IMR-90 (cell line): ENCODE measurements at regions of chr2 and their contacts with region 1.

Region 1: GRCh38 chr2:199488772-199489400 is 31.1 kb upstream of the SATB2 start:
- DNase-seq: peak; percentile 59
- ATAC-seq: peak; percentile 86
- H3K4me3 ChIP-seq: no peak overlapping the region
- H3K27ac ChIP-seq: no peak overlapping the region
- H3K4me1 ChIP-seq: no peaks in the 10 kb centered on the region
- H3K27me3 ChIP-seq: no peaks in the 10 kb centered on the region
- CTCF ChIP-seq: peak; percentile 81
- POLR2A ChIP-seq: no peak
- RAD21 ChIP-seq: peak; percentile 76

Region 2: GRCh38 chr2:198309673-198310280 is 1179.1 kb before region 1 on chr2:
- CTCF ChIA-PET with region 1: interaction called, 30 read pairs
- POLR2A ChIA-PET with region 1: no interaction called
- dilution Hi-C with region 1: no loop called
- in situ Hi-C with region 1: loop called (anchors 10 kb)
- intact Hi-C with region 1: loop called (anchors 1 kb)
- DNase-seq: peak; percentile 38
- ATAC-seq: peak; percentile 56
- H3K4me3 ChIP-seq: no peak overlapping the region
- H3K27ac ChIP-seq: no peak overlapping the region
- H3K4me1 ChIP-seq: no peaks in the 10 kb centered on the region
- H3K27me3 ChIP-seq: no peaks in the 10 kb centered on the region; the same call in 1 of the 2 replicates
- CTCF ChIP-seq: peak; percentile 81
- POLR2A ChIP-seq: no peak
- RAD21 ChIP-seq: peak; percentile 54

Region 3: DNA sequence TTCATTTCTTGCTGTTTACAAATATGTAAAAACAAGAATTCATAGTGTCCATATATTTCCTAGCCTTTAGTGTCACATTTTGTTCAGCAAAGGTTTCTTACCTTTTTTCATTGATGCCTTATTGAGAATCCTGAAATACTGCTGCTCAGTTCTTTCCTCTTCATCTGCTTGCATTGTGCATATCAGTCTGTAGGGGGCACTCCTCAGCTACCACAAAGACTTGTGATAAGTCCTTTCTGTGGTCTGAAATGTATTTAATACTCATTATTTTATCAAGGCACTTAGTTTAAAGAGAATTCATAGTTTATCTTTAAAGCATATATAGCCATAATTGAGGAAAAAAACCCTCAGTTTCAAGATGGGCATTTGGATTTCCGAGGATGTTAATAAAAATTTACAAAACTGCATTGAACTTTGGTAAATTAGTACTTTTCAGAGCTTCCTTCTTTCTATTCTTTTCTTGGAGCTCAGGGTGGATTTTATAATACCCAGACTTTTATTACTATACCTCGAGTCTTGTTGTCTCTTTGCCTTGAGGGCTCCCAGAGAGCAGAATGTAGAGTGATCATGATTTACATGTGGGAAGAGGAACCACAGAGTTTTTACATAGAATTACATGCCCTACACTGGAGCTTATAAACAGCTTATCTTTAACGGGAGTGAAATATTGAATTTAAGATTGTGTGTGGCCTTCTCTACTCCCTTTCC is 1114.4 kb before region 1 on chr2:
- CTCF ChIA-PET with region 1: interaction called, 12 read pairs
- POLR2A ChIA-PET with region 1: no interaction called
- dilution Hi-C with region 1: no loop called
- in situ Hi-C with region 1: loop called (anchors 25 kb)
- intact Hi-C with region 1: loop called (anchors 1 kb)
- DNase-seq: peak; percentile 70
- ATAC-seq: peak; percentile 79
- H3K4me3 ChIP-seq: no peak overlapping the region
- H3K27ac ChIP-seq: no peak overlapping the region
- H3K4me1 ChIP-seq: no peaks in the 10 kb centered on the region
- H3K27me3 ChIP-seq: no peaks in the 10 kb centered on the region
- CTCF ChIP-seq: peak; percentile 74
- POLR2A ChIP-seq: no peak
- RAD21 ChIP-seq: peak; percentile 75

Region 4: GRCh38 chr2:198657512-198658121 is 831.3 kb before region 1 on chr2:
- CTCF ChIA-PET with region 1: interaction called, 4 read pairs
- POLR2A ChIA-PET with region 1: no interaction called
- dilution Hi-C with region 1: no loop called
- in situ Hi-C with region 1: loop called (anchors 25 kb)
- intact Hi-C with region 1: loop called (anchors 1 kb)
- DNase-seq: peak; percentile 29
- ATAC-seq: no peak
- H3K4me3 ChIP-seq: no peak overlapping the region
- H3K27ac ChIP-seq: no peak overlapping the region
- H3K4me1 ChIP-seq: no peaks in the 10 kb centered on the region
- H3K27me3 ChIP-seq: no peaks in the 10 kb centered on the region
- CTCF ChIP-seq: peak; percentile 47
- POLR2A ChIP-seq: no peak
- RAD21 ChIP-seq: peak; percentile 27; the same call in 1 of the 2 replicates

Region 5: GRCh38 chr2:199378948-199379650 is 109.8 kb before region 1 on chr2:
- CTCF ChIA-PET with region 1: no interaction called
- POLR2A ChIA-PET with region 1: no interaction called
- dilution Hi-C with region 1: no loop called
- in situ Hi-C with region 1: no loop called
- intact Hi-C with region 1: no loop called
- DNase-seq: peak; percentile 75
- ATAC-seq: peak; percentile 85
- H3K4me3 ChIP-seq: no peak overlapping the region
- H3K27ac ChIP-seq: no peak overlapping the region
- H3K4me1 ChIP-seq: no peaks in the 10 kb centered on the region
- H3K27me3 ChIP-seq: no peaks in the 10 kb centered on the region
- CTCF ChIP-seq: no peak
- POLR2A ChIP-seq: no peak
- RAD21 ChIP-seq: no peak

Region 6: GRCh38 chr2:199409759-199410529 is 78.9 kb before region 1 on chr2:
- CTCF ChIA-PET with region 1: no interaction called
- POLR2A ChIA-PET with region 1: no interaction called
- dilution Hi-C with region 1: no loop called
- in situ Hi-C with region 1: no loop called
- intact Hi-C with region 1: no loop called
- DNase-seq: peak; percentile 36
- ATAC-seq: peak; percentile 59
- H3K4me3 ChIP-seq: no peak overlapping the region
- H3K27ac ChIP-seq: no peak overlapping the region
- H3K4me1 ChIP-seq: peaks cover 6% of the 10 kb centered on the region
- H3K27me3 ChIP-seq: no peaks in the 10 kb centered on the region
- CTCF ChIP-seq: no peak
- POLR2A ChIP-seq: no peak
- RAD21 ChIP-seq: no peak

Region 7: DNA sequence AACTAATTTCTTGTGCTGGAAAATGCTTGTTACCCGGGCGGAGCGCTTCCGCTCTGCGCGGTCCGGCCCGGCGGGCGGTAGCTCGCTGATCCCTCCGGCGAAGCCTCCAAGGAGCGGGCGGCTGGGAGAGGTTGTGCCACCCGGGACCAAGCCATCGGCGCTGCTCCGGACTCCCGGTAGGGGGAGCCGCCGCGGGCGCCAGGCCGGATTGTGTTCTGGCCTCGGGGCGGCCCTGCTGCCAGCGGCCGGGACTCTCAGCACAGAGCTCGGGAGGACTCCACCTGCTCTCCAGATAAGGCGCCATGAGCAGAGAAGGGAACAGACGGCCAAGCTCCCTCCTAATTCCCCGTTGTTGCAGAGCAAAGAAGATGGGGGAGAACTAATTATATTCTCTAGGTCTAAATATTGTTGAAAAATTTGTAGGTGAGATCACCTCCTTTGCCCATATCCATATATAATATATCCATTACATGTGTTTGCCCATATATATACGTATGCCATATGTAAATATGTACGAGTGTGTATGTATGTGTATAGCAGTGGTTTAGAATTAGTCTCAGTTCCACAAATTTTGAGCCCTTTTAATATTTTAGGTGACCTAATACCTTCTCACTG is 17.3 kb before region 1 on chr2:
- CTCF ChIA-PET with region 1: interaction called, 12 read pairs
- POLR2A ChIA-PET with region 1: no interaction called
- dilution Hi-C with region 1: no loop called
- in situ Hi-C with region 1: no loop called
- intact Hi-C with region 1: no loop called
- DNase-seq: peak; percentile 45
- ATAC-seq: peak; percentile 98
- H3K4me3 ChIP-seq: peak overlapping the region; percentile 28; the same call in 1 of the 2 replicates
- H3K27ac ChIP-seq: no peak overlapping the region
- H3K4me1 ChIP-seq: no peaks in the 10 kb centered on the region
- H3K27me3 ChIP-seq: peaks cover 65% of the 10 kb centered on the region
- CTCF ChIP-seq: peak; percentile 75
- POLR2A ChIP-seq: no peak
- RAD21 ChIP-seq: peak; percentile 45

Region 8: DNA sequence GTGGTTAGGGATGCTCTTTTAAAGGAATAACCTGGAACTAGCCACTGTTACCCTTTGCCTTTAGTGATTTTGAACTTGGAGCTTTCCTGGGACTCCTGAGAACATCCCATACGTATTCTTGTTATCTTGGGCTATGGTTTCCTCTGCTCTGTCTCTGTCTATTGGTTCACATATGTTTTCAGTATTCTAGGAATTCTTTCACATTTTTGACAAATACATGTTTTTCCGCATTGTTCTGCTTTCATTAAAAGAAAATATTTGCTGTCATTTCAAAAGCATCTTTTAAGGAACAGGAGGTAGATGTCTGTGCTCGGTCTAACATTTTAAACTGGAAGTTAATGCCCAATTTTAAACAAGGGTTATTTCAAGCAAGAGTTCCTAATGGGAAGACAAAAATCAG is 147.1 kb after region 1 on chr2:
- CTCF ChIA-PET with region 1: no interaction called
- POLR2A ChIA-PET with region 1: no interaction called
- dilution Hi-C with region 1: no loop called
- in situ Hi-C with region 1: no loop called
- intact Hi-C with region 1: no loop called
- DNase-seq: no peak
- ATAC-seq: no peak
- H3K4me3 ChIP-seq: no peak overlapping the region
- H3K27ac ChIP-seq: no peak overlapping the region
- H3K4me1 ChIP-seq: no peaks in the 10 kb centered on the region
- H3K27me3 ChIP-seq: no peaks in the 10 kb centered on the region
- CTCF ChIP-seq: no peak
- POLR2A ChIP-seq: no peak
- RAD21 ChIP-seq: no peak

Region 9: GRCh38 chr2:199861132-199861774 is 372.4 kb after region 1 on chr2:
- CTCF ChIA-PET with region 1: no interaction called
- POLR2A ChIA-PET with region 1: no interaction called
- dilution Hi-C with region 1: no loop called
- in situ Hi-C with region 1: no loop called
- intact Hi-C with region 1: loop called (anchors 5 kb)
- DNase-seq: peak; percentile 38
- ATAC-seq: peak; percentile 63
- H3K4me3 ChIP-seq: no peak overlapping the region
- H3K27ac ChIP-seq: no peak overlapping the region
- H3K4me1 ChIP-seq: no peaks in the 10 kb centered on the region
- H3K27me3 ChIP-seq: peaks cover 12% of the 10 kb centered on the region
- CTCF ChIP-seq: peak; percentile 64
- POLR2A ChIP-seq: no peak
- RAD21 ChIP-seq: peak; percentile 57